ENCODE measurements at regions of chr15 and their contacts with region 1.

Region 1: GRCh38 chr15:68587769-68588385 is 9.1 kb downstream of the CORO2B start:
- DNase-seq: no peak
- H3K4me3 Mint-ChIP-seq: no peak overlapping the region
- H3K27ac Mint-ChIP-seq: peak overlapping the region; percentile 71
- H3K4me1 Mint-ChIP-seq: peaks cover 23% of the 10 kb centered on the region
- H3K27me3 Mint-ChIP-seq: peaks cover 3% of the 10 kb centered on the region

Region 2: GRCh38 chr15:68464448-68465090 is 123.3 kb before region 1 on chr15:
- intact Hi-C with region 1: no loop called
- DNase-seq: no peak
- H3K4me3 Mint-ChIP-seq: no peak overlapping the region
- H3K27ac Mint-ChIP-seq: no peak overlapping the region
- H3K4me1 Mint-ChIP-seq: no peaks in the 10 kb centered on the region
- H3K27me3 Mint-ChIP-seq: peaks cover 10% of the 10 kb centered on the region

Region 3: DNA sequence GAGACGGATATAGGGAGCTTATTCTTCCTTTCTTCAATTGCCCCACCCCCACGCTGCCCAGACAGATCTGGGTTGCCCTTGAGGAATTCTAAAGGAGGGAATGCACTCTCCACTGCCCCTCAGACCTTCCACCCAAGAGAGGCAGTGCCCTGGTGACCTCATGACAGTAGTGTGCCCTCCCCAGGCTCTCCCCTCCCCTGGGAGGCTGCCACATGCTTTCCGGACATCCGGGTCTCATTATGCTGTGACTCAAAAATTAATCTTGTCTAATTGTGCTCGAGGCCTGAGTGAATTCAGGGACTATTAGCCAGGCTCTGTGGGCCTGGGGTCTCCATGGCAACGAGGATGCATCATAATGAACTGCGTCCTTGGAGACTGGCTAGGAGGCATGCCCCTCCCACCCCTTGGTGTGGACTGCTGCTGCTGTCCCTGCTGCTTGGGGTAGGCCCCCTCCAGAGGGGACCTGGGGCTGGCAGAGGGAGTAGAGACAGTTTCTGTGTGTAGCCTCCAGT is 11.7 kb after region 1 on chr15:
- intact Hi-C with region 1: loop called (anchors 1 kb)
- DNase-seq: no peak
- H3K4me3 Mint-ChIP-seq: no peak overlapping the region
- H3K27ac Mint-ChIP-seq: no peak overlapping the region
- H3K4me1 Mint-ChIP-seq: no peaks in the 10 kb centered on the region
- H3K27me3 Mint-ChIP-seq: peaks cover 2% of the 10 kb centered on the region

Region 4: DNA sequence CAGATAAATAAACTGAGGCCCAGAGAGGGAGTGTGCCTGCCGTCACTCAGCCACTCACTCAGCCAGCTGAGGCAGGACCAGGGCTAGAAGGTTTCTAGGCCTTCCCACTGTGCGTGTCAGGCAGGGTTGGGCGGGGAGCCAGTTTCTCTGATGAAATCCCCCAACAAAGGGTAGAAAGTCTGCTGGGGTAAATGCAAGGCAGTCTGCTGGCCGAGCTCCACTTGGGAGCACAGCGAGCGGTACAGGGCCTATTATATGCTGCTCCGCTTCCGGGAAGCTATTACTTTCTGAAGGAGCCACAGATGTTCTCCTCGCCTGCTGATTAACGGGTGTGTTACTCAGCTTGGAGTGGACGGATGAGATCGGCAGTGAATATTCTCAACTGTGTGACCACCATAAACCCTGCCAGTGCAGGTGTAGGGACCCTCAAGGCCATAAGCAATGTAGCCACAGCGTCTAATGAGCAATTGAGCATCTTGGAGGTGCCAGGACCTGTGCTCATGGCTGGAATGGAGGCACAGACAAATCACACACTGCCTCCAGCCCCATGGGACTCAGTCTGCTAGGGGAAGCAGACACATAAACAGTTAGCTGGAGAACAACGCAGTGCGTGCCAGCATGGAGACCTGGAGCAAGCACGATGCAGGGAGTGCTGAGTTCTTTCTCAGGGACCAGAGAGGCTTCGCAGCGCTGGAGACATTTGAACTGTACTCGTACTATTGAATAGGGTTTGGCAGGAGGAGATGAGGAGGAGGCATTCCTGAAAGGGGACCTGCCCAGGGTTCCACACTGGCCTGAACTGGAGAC is 33.0 kb after region 1 on chr15:
- intact Hi-C with region 1: no loop called
- DNase-seq: no peak
- H3K4me3 Mint-ChIP-seq: no peak overlapping the region
- H3K27ac Mint-ChIP-seq: no peak overlapping the region
- H3K4me1 Mint-ChIP-seq: no peaks in the 10 kb centered on the region
- H3K27me3 Mint-ChIP-seq: peaks cover 3% of the 10 kb centered on the region